ENCODE measurements at regions of chr12 and their contacts with region 1.

Region 1: GRCh38 chr12:117857632-117858612 is 110.9 kb downstream of the KSR2 start:
- DNase-seq: no peak
- ATAC-seq: peak; percentile 72
- H3K4me3 ChIP-seq: no peak overlapping the region
- H3K27ac ChIP-seq: no peak overlapping the region
- H3K4me1 ChIP-seq: peaks cover 9 to 34% of the 10 kb centered on the region in 2 experiments
- H3K27me3 ChIP-seq: no peaks in the 10 kb centered on the region
- CTCF ChIP-seq: peak; percentile 48 to 78 (median 74); a peak in 5 of 6 replicates
- POLR2A ChIP-seq: no peak
- RAD21 ChIP-seq: peak; percentile 21

Region 2: DNA sequence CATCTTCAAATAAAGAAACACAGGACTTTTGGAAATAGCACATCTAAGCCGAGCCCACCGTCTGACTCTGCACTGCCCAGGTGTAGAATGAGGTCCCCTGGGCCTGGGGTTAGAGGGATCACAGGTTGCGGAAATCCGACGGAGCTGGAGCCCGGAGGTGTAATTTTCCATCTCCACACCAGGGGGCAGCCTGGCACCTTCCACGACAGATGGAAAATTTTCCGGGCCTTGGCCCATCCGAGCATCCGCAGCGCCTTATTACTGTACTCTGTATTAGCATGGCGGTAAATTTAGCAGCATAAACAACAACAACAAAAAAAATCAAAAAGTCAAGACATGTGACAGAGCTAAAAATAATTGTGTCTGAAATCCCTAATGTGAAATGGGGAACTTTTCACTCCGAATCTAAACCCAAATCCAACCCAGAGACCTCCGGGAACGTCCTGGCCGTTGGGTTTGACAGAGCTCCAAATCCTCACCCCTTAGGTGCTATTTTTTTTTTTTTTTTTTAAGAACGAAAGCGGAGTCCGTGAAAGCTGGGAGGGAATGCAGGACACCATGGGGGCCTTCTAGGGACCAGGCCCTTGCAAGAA is 17.0 kb after region 1 on chr12:
- CTCF ChIA-PET with region 1: interaction called, 19 read pairs
- POLR2A ChIA-PET with region 1: no interaction called
- RAD21 ChIA-PET with region 1: no interaction called
- intact Hi-C with region 1: no loop called
- DNase-seq: peak; percentile 57
- ATAC-seq: peak; percentile 84
- H3K4me3 ChIP-seq: no peak overlapping the region
- H3K27ac ChIP-seq: no peak overlapping the region
- H3K4me1 ChIP-seq: peaks cover 7 to 25% of the 10 kb centered on the region in 2 experiments; a peak in 3 of 4 replicates
- H3K27me3 ChIP-seq: no peaks in the 10 kb centered on the region
- CTCF ChIP-seq: peak; percentile 84 to 92 (median 84)
- POLR2A ChIP-seq: no peak
- RAD21 ChIP-seq: peak; percentile 98

Measured in HCT116 (cell line).